ENCODE measurements at regions of chr6 and their contacts with region 1.

Region 1: GRCh38 chr6:42009966-42010891 is 40.1 kb upstream of the TAF8 start:
- DNase-seq: peak; percentile 6
- H3K4me3 ChIP-seq: no peak overlapping the region
- H3K27ac ChIP-seq: no peak overlapping the region
- H3K4me1 ChIP-seq: peaks cover 5% of the 10 kb centered on the region
- H3K27me3 ChIP-seq: no peaks in the 10 kb centered on the region
- CTCF ChIP-seq: no peak
- POLR2A ChIP-seq: no peak

Region 2: GRCh38 chr6:43093436-43094289 is 1083.4 kb after region 1 on chr6:
- CTCF ChIA-PET with region 1: no interaction called
- POLR2A ChIA-PET with region 1: no interaction called
- dilution Hi-C with region 1: no loop called
- intact Hi-C with region 1: loop called (anchors 5 kb)
- DNase-seq: peak; percentile 57
- H3K4me3 ChIP-seq: peak overlapping the region in 1 of 3 experiments; percentile 15
- H3K27ac ChIP-seq: no peak overlapping the region
- H3K4me1 ChIP-seq: peaks cover 17% of the 10 kb centered on the region
- H3K27me3 ChIP-seq: no peaks in the 10 kb centered on the region
- CTCF ChIP-seq: no peak
- POLR2A ChIP-seq: no peak

Measured in endothelial cell of umbilical vein (primary cell).